ENCODE measurements at regions of chr16 and their contacts with region 1.

Region 1: DNA sequence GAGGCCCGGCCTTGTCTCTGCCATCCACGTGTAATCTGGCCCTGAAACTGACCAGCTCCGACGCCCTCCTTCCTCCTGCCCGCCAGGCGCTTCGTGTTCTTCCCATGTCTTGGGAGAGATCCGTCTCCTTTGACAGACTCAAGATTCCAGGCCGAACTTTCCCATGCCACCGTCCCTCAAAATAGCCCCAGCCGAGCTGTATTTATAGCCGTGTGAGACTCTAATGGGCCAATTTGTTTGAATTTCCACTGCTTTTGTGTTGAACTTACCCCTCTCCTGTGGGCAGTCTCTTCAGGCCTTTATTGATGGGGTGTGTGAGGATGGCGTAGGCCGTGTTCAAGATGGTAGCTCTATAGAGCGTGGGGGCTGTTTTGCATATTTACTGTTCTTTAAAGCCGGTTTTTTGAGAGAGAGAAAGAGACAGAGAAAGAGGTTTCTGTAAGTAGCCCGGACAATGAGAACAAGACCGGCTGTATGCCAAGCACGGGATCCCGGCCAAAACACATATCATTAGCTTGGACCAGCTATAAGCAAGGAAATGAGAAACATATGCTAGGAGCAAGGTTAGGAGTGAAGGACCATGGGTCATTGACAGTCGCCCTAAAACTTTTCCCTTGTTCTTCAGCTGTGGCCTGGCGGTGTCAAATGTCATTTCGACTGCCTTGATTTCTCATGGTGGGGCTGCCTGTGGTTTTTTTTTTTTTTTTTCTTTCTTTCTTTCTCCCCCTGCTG is 124.5 kb upstream of the ZFHX3 start:
- DNase-seq: peak; percentile 85 to 90
- H3K4me3 ChIP-seq: no peak overlapping the region
- H3K27ac ChIP-seq: peak overlapping the region; percentile 65 to 66
- H3K4me1 ChIP-seq: peaks cover 5 to 8% of the 10 kb centered on the region in 2 donors
- H3K27me3 ChIP-seq: no peaks in the 10 kb centered on the region
- CTCF ChIP-seq: peak in 1 of 4 experiments; percentile 39
- POLR2A ChIP-seq: no peak

Region 2: GRCh38 chr16:73068541-73069401 is 103.6 kb before region 1 on chr16:
- intact Hi-C with region 1: loop called (anchors 10 kb)
- DNase-seq: peak; percentile 62 to 64
- H3K4me3 ChIP-seq: no peak overlapping the region
- H3K27ac ChIP-seq: peak overlapping the region; percentile 82 to 94
- H3K4me1 ChIP-seq: peaks cover 5 to 12% of the 10 kb centered on the region in 2 donors
- H3K27me3 ChIP-seq: no peaks in the 10 kb centered on the region
- CTCF ChIP-seq: no peak
- POLR2A ChIP-seq: peak; percentile 18 to 21

Region 3: GRCh38 chr16:73082608-73083007 is 89.8 kb before region 1 on chr16:
- intact Hi-C with region 1: no loop called
- DNase-seq: no peak
- H3K4me3 ChIP-seq: no peak overlapping the region
- H3K27ac ChIP-seq: no peak overlapping the region
- H3K4me1 ChIP-seq: no peaks in the 10 kb centered on the region
- H3K27me3 ChIP-seq: no peaks in the 10 kb centered on the region
- CTCF ChIP-seq: no peak
- POLR2A ChIP-seq: no peak

Measured in uterus (tissue), 4 donors.